Naive thymus-derived CD4-positive, alpha-beta T cell (primary cell): ENCODE measurements at regions of chr2 and their contacts with region 1.

Region 1: DNA sequence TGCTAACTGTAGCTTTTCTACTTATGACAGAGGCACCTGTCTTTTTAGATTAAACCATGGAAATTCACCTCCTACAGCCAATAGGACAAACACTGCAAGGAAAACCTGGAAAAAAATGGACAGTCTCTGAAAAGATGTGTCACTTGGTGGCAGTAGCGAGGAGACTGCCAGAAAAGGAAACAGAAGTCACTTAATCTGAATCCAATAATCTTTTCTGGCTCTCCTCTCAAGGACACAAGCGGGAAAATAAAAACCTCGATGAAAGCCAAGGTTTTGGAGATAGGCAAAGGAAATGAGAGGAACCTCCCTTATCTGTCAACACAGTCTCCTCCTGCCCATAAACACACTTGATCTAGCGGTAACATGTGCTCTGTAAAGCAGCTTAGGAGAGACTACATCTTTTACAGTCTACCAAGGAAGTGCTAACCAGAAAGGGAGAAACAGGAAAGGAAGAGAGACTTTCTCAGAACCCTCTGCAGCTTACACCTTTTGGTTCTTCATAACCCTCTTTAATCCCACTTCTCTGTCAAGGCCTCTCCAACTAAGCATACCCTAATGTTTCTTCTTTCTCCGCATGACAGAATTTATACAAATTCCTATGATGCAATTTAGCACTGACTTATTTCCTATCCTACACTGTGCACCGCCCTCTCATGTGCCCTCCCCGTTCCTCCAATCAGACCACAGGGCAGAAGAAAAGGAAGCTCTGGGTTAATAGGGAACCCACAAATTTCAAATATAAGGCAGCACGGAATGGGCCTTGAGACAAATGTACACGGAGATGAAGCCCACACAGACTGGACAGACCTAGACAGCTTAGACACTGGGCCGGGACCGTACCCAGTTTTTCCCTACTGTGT is 52.8 kb downstream of the CLASP1 start:
- DNase-seq: peak in 4 of 9 donors; percentile 9 to 17 (median 14)
- ATAC-seq: peak; percentile 95
- H3K4me3 ChIP-seq: no peak overlapping the region
- H3K4me3 Mint-ChIP-seq: peak overlapping the region; percentile 51 to 90 (median 77)
- H3K27ac ChIP-seq: peak overlapping the region; percentile 55
- H3K27ac Mint-ChIP-seq: peak overlapping the region; percentile 33 to 96 (median 83)
- H3K4me1 ChIP-seq: peaks cover 9 to 14% of the 10 kb centered on the region in 2 donors
- H3K4me1 Mint-ChIP-seq: peaks cover 30 to 66% (median 59%) of the 10 kb centered on the region in 7 donors
- H3K27me3 ChIP-seq: no peaks in the 10 kb centered on the region
- H3K27me3 Mint-ChIP-seq: no peaks in the 10 kb centered on the region

Region 2: DNA sequence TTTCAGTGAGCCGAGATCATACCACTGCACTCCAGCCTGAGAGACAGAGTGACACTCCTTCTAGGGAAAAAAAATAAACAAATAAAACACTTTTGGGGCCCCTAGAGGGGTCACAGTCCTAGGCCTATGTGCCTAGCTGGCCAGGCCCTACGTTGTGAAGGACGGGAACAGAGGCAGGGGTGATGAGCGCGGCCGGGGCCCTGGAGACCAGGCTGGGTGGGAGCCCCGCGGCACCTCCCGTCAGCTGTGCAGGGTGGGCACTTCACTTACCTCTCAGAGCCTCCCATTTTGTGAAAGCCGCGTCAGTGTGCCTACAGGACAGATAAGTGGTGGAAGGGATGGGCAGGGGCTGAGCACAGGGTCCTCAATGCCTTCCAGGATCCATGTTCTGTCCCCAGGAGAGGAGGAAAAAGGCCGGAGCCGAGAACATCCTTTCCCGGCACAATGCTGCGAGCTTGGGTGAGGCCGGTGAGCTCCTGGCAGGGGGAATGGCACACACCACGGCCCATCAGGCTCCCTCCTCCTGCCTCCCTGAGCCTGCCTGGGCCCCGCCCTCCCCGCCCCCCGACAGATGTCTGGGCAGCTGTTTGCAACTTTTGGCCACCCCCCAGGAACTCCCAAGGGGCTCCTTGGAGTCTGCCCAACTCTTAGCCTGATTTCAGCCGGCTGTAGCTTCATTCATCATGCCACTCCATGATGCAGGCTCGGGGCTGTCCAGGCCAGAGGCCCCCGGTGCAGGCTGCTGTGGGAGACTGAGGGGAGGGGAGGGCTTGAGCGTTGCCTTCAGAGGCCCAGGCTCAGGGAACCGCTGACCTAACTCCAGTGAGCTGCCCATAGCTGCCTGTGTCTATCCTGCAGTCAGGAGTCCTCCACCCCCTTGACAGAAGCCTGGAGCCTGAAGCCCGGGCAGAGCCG is 507.9 kb before region 1 on chr2:
- CTCF ChIA-PET with region 1: no interaction called
- POLR2A ChIA-PET with region 1: no interaction called
- intact Hi-C with region 1: no loop called
- DNase-seq: no peak
- ATAC-seq: no peak
- H3K4me3 ChIP-seq: no peak overlapping the region
- H3K4me3 Mint-ChIP-seq: no peak overlapping the region
- H3K27ac ChIP-seq: no peak overlapping the region
- H3K27ac Mint-ChIP-seq: no peak overlapping the region
- H3K4me1 ChIP-seq: no peaks in the 10 kb centered on the region
- H3K4me1 Mint-ChIP-seq: peaks cover 0 to 2% (median 0%) of the 10 kb centered on the region in 7 donors
- H3K27me3 ChIP-seq: no peaks in the 10 kb centered on the region
- H3K27me3 Mint-ChIP-seq: peaks cover 2 to 9% (median 4%) of the 10 kb centered on the region in 5 donors

Region 3: GRCh38 chr2:121617042-121617599 is 20.7 kb after region 1 on chr2:
- CTCF ChIA-PET with region 1: no interaction called
- POLR2A ChIA-PET with region 1: no interaction called
- intact Hi-C with region 1: loop called in 1 of 2 experiments (anchors 2 kb)
- DNase-seq: peak in 3 of 9 donors; percentile 4 to 13 (median 5)
- ATAC-seq: peak; percentile 48
- H3K4me3 ChIP-seq: no peak overlapping the region
- H3K4me3 Mint-ChIP-seq: no peak overlapping the region
- H3K27ac ChIP-seq: no peak overlapping the region
- H3K27ac Mint-ChIP-seq: no peak overlapping the region
- H3K4me1 ChIP-seq: peaks cover 0 to 6% of the 10 kb centered on the region in 2 donors
- H3K4me1 Mint-ChIP-seq: peaks cover 5 to 29% (median 14%) of the 10 kb centered on the region in 7 donors
- H3K27me3 ChIP-seq: no peaks in the 10 kb centered on the region
- H3K27me3 Mint-ChIP-seq: no peaks in the 10 kb centered on the region

Region 4: GRCh38 chr2:121634354-121635307 is 38.2 kb after region 1 on chr2:
- CTCF ChIA-PET with region 1: no interaction called
- POLR2A ChIA-PET with region 1: no interaction called
- intact Hi-C with region 1: loop called in 1 of 2 experiments (anchors 5 kb)
- DNase-seq: no peak
- ATAC-seq: no peak
- H3K4me3 ChIP-seq: no peak overlapping the region
- H3K4me3 Mint-ChIP-seq: peak overlapping the region in 3 of 10 donors; percentile 3 to 32 (median 24)
- H3K27ac ChIP-seq: no peak overlapping the region
- H3K27ac Mint-ChIP-seq: peak overlapping the region in 8 of 9 donors; percentile 29 to 84 (median 54)
- H3K4me1 ChIP-seq: peaks cover 0 to 7% of the 10 kb centered on the region in 2 donors
- H3K4me1 Mint-ChIP-seq: peaks cover 23 to 55% (median 50%) of the 10 kb centered on the region in 7 donors
- H3K27me3 ChIP-seq: no peaks in the 10 kb centered on the region
- H3K27me3 Mint-ChIP-seq: no peaks in the 10 kb centered on the region

Region 5: DNA sequence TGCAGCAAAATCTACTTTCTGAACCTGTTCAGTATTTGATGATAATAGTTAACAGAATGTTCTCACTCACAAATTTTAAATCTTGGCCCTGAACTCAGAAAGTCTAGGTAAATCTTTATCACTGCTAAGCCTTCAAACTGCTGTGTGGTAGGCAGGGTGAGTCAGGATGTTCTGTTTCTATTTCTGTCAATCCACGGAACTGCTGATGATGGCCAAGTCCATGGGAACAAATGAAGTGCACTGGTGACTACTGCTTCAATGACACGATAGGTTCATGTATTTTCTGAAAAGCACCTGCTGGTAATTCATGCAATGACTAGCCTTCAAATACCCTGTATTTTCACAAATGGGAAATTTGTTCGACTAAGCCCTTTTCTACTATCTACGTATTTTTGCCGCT is 126.0 kb after region 1 on chr2:
- CTCF ChIA-PET with region 1: no interaction called
- POLR2A ChIA-PET with region 1: interaction called, 4 read pairs
- intact Hi-C with region 1: loop called (anchors 1 kb)
- DNase-seq: no peak
- ATAC-seq: no peak
- H3K4me3 ChIP-seq: no peak overlapping the region
- H3K4me3 Mint-ChIP-seq: no peak overlapping the region
- H3K27ac ChIP-seq: no peak overlapping the region
- H3K27ac Mint-ChIP-seq: no peak overlapping the region
- H3K4me1 ChIP-seq: peaks cover 0 to 6% of the 10 kb centered on the region in 2 donors
- H3K4me1 Mint-ChIP-seq: peaks cover 2 to 22% (median 6%) of the 10 kb centered on the region in 7 donors
- H3K27me3 ChIP-seq: no peaks in the 10 kb centered on the region
- H3K27me3 Mint-ChIP-seq: no peaks in the 10 kb centered on the region